ENCODE measurements at regions of chr12 and their contacts with region 1.

Region 1: GRCh38 chr12:26434299-26435068 is 239.1 kb downstream of the SSPN start:
- DNase-seq: peak; percentile 79
- H3K4me3 ChIP-seq: no peak overlapping the region
- H3K27ac ChIP-seq: no peak overlapping the region
- H3K4me1 ChIP-seq: no peaks in the 10 kb centered on the region
- H3K27me3 ChIP-seq: no peaks in the 10 kb centered on the region
- CTCF ChIP-seq: peak; percentile 79

Region 2: GRCh38 chr12:26097046-26097878 is 337.2 kb before region 1 on chr12:
- CTCF ChIA-PET with region 1: no interaction called
- POLR2A ChIA-PET with region 1: no interaction called
- intact Hi-C with region 1: no loop called
- DNase-seq: peak; percentile 83
- H3K4me3 ChIP-seq: no peak overlapping the region
- H3K27ac ChIP-seq: no peak overlapping the region
- H3K4me1 ChIP-seq: peaks cover 3% of the 10 kb centered on the region
- H3K27me3 ChIP-seq: no peaks in the 10 kb centered on the region
- CTCF ChIP-seq: peak; percentile 95

Region 3: GRCh38 chr12:26614020-26614616 is 179.6 kb after region 1 on chr12:
- CTCF ChIA-PET with region 1: interaction called, 3 read pairs
- POLR2A ChIA-PET with region 1: no interaction called
- intact Hi-C with region 1: loop called (anchors 2 kb)
- DNase-seq: peak; percentile 62
- H3K4me3 ChIP-seq: no peak overlapping the region
- H3K27ac ChIP-seq: no peak overlapping the region
- H3K4me1 ChIP-seq: no peaks in the 10 kb centered on the region
- H3K27me3 ChIP-seq: no peaks in the 10 kb centered on the region
- CTCF ChIP-seq: peak; percentile 84

Measured in A673 (cell line).